ENCODE measurements at regions of chr3 and their contacts with region 1.

Region 1: DNA sequence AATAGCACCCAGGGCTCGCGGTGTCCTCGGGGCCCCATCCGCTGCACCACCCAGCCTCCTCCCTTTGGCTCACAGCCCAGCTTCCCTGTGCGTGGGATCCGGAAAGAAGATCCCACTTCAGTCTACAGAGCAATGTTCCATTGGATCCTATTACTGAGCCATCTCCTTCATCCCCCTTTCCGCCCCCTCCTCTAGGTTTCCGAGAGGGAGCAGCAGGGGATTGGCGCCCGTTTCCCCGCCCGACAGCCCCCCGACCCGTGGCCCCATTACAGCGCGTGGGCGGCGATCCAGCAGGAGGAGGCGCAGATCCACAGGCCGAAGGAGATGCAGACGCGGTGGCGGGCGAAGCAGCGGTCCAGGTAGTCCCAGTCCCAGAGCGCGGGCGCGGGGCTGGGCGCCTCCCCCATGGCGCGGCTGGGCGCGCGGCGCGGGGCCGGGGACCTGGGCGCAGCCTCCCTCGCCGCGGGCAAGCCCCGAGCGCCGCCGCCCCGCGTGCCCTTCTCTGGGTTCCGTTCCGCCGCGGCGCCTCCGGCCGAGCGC is 340 bp downstream of the TMEM44 start:
- DNase-seq: peak; percentile 12
- H3K4me3 Mint-ChIP-seq: peak overlapping the region; percentile 82
- H3K27ac Mint-ChIP-seq: no peak overlapping the region
- H3K4me1 Mint-ChIP-seq: no peaks in the 10 kb centered on the region
- H3K27me3 Mint-ChIP-seq: no peaks in the 10 kb centered on the region

Region 2: GRCh38 chr3:194395778-194396547 is 236.9 kb before region 1 on chr3:
- intact Hi-C with region 1: loop called (anchors 5 kb)
- DNase-seq: peak; percentile 48
- H3K4me3 Mint-ChIP-seq: peak overlapping the region; percentile 71
- H3K27ac Mint-ChIP-seq: peak overlapping the region; percentile 55
- H3K4me1 Mint-ChIP-seq: peaks cover 34% of the 10 kb centered on the region
- H3K27me3 Mint-ChIP-seq: peaks cover 37% of the 10 kb centered on the region

Region 3: DNA sequence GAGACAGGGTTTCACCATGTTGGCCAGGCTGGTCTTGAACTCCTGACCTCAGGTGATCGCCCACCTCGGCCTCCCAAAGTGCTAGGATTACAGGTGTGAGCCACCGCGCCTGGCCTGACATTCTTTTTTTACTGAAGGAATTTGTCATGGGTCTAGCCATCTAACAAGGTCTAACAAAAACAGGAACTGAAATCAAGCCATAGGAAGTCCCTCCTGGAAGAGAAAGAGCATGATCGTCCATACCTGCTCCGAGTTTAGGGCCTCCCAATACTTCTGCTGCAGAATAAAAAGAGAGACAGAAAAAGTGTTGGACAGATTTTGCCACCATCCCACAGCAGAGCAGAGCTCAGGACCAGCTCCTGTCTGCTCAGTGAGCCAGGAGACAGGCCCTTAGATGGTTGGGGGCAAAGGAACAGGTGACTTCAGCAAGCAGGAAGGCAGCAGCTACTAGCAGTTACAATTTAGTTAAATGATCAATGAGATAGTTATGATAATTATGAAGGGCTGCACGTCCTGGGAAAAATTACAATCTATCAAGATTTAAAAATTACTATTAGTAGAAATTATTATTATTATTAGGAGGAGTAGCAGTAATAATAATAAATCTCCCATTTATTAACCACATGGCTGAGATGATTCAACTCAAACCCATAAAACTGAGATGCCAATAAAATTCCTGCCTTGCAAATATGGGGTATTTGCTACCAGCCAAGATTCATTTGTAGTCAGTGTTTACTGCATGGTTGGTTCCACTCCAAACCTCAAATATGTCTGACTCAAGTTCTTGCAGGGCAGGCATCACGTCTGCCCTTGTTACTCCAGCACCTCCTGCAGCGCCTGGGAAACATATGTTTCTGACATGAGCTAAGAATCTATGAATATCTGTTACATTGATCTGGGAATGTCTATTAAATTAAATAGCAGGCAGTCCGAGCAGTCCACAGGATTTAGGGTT is 39.8 kb before region 1 on chr3:
- intact Hi-C with region 1: loop called (anchors 5 kb)
- DNase-seq: no peak
- H3K4me3 Mint-ChIP-seq: no peak overlapping the region
- H3K27ac Mint-ChIP-seq: no peak overlapping the region
- H3K4me1 Mint-ChIP-seq: peaks cover 5% of the 10 kb centered on the region
- H3K27me3 Mint-ChIP-seq: no peaks in the 10 kb centered on the region

Measured in activated T-helper 2 cell treated with anti-CD3 and anti-CD28 coated beads, Interferon-gamma antibody, Interleukin-2, Interleukin-4, amounts not matched to agents 10 μg/mL and 5 μg/mL and 100 μg/mL, durations not matched to agents 14 hours and 24 hours and 36 hours (primary cell).